PC-3 (cell line): ENCODE measurements at regions of chr3 and their contacts with region 1.

Region 1: DNA sequence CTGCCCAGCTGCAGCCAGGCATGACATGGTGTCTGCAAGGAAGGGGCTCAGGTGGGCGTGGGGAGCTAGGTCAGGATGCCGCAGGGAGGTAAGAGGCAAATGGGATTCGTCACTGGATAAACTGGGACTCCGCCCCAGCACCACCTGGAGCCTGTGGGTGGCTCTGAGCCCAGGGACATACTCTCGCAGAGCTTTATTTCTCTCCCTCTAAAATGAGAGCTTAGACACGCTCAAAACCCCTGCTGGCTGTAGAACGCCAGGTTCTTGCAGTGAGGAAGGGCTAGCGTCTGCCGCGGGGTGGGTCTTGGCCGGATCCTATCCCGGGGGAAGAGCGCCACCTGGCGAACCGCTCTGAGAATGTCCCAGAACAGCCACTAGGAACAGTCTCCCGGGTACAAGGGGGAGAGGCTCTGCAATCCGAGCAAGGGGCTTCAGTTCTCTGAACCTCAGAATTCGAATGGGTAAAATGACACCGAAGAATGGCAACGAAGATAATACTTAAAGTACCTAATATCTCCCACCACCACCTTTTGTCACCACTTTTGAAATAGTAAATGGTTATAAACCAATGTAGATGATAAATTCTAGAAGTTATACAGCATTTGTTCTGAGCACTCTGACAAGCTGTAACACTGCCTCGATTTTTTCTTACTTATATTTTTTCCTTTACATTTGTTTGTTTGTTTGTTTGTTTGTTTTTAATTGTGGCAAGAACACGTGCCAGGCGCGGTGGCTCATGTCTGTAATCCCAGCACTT is 53.2 kb upstream of the SRGAP3 start:
- DNase-seq: peak; percentile 95
- ATAC-seq: peak; percentile 94
- H3K4me3 ChIP-seq: peak overlapping the region; percentile 66
- H3K27ac ChIP-seq: peak overlapping the region; percentile 70
- H3K4me1 ChIP-seq: peaks cover 13% of the 10 kb centered on the region
- H3K27me3 ChIP-seq: no peaks in the 10 kb centered on the region
- CTCF ChIP-seq: peak; percentile 97

Region 2: GRCh38 chr3:8987645-8988383 is 314.8 kb before region 1 on chr3:
- CTCF ChIA-PET with region 1: interaction called, 16 read pairs
- POLR2A ChIA-PET with region 1: no interaction called
- intact Hi-C with region 1: loop called (anchors 1 kb)
- DNase-seq: peak; percentile 75
- ATAC-seq: peak; percentile 89
- H3K4me3 ChIP-seq: no peak overlapping the region
- H3K27ac ChIP-seq: no peak overlapping the region
- H3K4me1 ChIP-seq: no peaks in the 10 kb centered on the region
- H3K27me3 ChIP-seq: no peaks in the 10 kb centered on the region
- CTCF ChIP-seq: peak; percentile 95

Region 3: GRCh38 chr3:9067352-9067975 is 235.1 kb before region 1 on chr3:
- CTCF ChIA-PET with region 1: no interaction called
- POLR2A ChIA-PET with region 1: no interaction called
- intact Hi-C with region 1: loop called (anchors 1 kb)
- DNase-seq: peak; percentile 78
- ATAC-seq: peak; percentile 94
- H3K4me3 ChIP-seq: no peak overlapping the region
- H3K27ac ChIP-seq: no peak overlapping the region
- H3K4me1 ChIP-seq: no peaks in the 10 kb centered on the region
- H3K27me3 ChIP-seq: no peaks in the 10 kb centered on the region
- CTCF ChIP-seq: peak; percentile 97

Region 4: GRCh38 chr3:9142362-9142761 is 160.2 kb before region 1 on chr3:
- CTCF ChIA-PET with region 1: interaction called, 4 read pairs
- POLR2A ChIA-PET with region 1: no interaction called
- intact Hi-C with region 1: loop called (anchors 1 kb)
- DNase-seq: peak; percentile 62
- ATAC-seq: peak; percentile 87
- H3K4me3 ChIP-seq: no peak overlapping the region
- H3K27ac ChIP-seq: no peak overlapping the region
- H3K4me1 ChIP-seq: peaks cover 13% of the 10 kb centered on the region
- H3K27me3 ChIP-seq: no peaks in the 10 kb centered on the region
- CTCF ChIP-seq: no peak

Region 5: DNA sequence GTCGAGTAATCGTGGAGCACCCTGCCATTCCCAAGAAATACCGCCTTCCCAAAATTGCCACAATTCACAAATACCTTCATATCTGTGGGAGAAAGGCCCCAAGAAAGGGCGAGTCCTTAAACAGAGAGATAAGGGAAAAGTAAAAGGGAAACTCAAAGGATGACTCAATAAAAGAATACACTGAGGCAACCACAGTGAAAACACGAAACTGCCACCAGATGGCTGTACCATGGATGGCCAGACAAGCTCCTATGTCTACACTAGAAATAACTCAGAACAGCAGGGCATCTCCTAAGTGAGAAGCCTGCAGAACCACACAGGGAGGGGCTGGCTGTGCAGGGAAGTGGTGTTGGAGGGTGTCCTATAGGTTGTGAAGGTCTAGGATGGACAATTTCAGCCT is 78.1 kb before region 1 on chr3:
- CTCF ChIA-PET with region 1: interaction called, 4 read pairs
- POLR2A ChIA-PET with region 1: no interaction called
- intact Hi-C with region 1: loop called (anchors 2 kb)
- DNase-seq: peak; percentile 52
- ATAC-seq: peak; percentile 28
- H3K4me3 ChIP-seq: no peak overlapping the region
- H3K27ac ChIP-seq: no peak overlapping the region
- H3K4me1 ChIP-seq: peaks cover 37% of the 10 kb centered on the region
- H3K27me3 ChIP-seq: no peaks in the 10 kb centered on the region
- CTCF ChIP-seq: peak; percentile 48

Region 6: GRCh38 chr3:10408680-10409079 is 1106.1 kb after region 1 on chr3:
- CTCF ChIA-PET with region 1: no interaction called
- POLR2A ChIA-PET with region 1: no interaction called
- intact Hi-C with region 1: no loop called
- DNase-seq: no peak
- ATAC-seq: no peak
- H3K4me3 ChIP-seq: no peak overlapping the region
- H3K27ac ChIP-seq: no peak overlapping the region
- H3K4me1 ChIP-seq: no peaks in the 10 kb centered on the region
- H3K27me3 ChIP-seq: no peaks in the 10 kb centered on the region
- CTCF ChIP-seq: no peak